CD8-positive, alpha-beta T cell (primary cell): ENCODE measurements at regions of chr3 and their contacts with region 1.

Region 1: DNA sequence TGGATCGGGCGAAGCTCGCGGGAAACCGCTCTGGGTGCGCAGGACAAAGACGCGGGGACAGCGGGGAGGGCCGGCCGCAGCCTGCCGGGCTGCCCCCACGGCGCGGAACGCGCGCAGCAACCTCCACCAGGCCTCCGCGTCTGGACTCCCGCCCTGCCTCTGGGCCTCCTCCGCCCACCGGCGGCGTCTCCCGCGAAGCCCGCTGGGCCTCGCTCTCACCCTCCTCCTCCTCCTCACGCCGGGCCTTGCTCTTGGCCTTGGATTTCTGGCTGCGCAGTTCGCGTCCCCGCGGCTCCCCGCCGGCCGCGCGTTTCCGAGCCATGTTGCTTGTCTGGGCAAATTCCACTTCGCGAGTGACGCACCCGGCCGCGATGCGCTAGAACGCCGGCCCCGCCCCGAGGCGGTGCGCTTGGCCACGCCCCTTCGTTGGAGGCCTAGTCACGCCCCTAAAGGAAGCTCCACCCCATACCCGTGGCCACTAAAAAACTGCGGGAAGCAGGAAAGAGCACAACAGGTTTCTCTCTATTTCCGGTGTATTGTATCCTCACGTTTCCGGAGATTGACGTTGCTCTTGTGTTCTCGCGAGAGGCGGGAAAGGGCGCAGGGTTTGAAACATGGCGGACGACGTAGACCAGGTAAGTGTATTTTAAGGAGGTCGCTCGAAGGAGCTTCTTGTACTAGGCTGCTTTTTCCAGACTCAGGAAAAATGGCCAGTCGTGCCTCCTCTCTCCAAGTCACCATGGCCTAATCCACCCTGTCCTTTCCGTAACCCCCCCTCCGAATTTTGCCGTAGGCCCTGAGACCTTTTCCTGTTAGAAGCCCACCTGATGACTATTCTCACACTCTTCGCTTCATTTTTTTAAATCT is at the starts of genes LSM3 and XPC:
- DNase-seq: peak; percentile 96 to 99 (median 98)
- ATAC-seq: peak; percentile 94
- H3K4me3 ChIP-seq: peak within 1 kb of the TSS; percentile 68
- H3K4me3 Mint-ChIP-seq: peak within 1 kb of the TSS; percentile 96
- H3K27ac ChIP-seq: peak within 1 kb of the TSS; percentile 91 to 99
- H3K27ac Mint-ChIP-seq: peak within 1 kb of the TSS; percentile 99
- H3K4me1 ChIP-seq: peaks cover 49% of the 10 kb centered on the region
- H3K4me1 Mint-ChIP-seq: peaks cover 78% of the 10 kb centered on the region
- H3K27me3 ChIP-seq: no peaks in the 10 kb centered on the region
- H3K27me3 Mint-ChIP-seq: no peaks in the 10 kb centered on the region
- CTCF ChIP-seq: no peak
- total RNA-seq, gene LSM3: 7.5 to 8.3 TPM
- total RNA-seq, gene XPC: 51.5 to 56.5 TPM

Region 2: GRCh38 chr3:12841149-12841970 is 1337.1 kb before region 1 on chr3 and contains the start of gene RPL32:
- CTCF ChIA-PET with region 1: no interaction called
- POLR2A ChIA-PET with region 1: no interaction called
- intact Hi-C with region 1: loop called in 1 of 2 experiments (anchors 5 kb)
- DNase-seq: peak; percentile 72 to 97 (median 84)
- ATAC-seq: peak; percentile 91
- H3K4me3 ChIP-seq: peak within 1 kb of the TSS; percentile 86 to 98
- H3K4me3 Mint-ChIP-seq: peak within 1 kb of the TSS; percentile 98
- H3K27ac ChIP-seq: peak within 1 kb of the TSS; percentile 93 to 95
- H3K27ac Mint-ChIP-seq: peak within 1 kb of the TSS; percentile 99
- H3K4me1 ChIP-seq: peaks cover 29% of the 10 kb centered on the region
- H3K4me1 Mint-ChIP-seq: peaks cover 48% of the 10 kb centered on the region
- H3K27me3 ChIP-seq: no peaks in the 10 kb centered on the region
- H3K27me3 Mint-ChIP-seq: no peaks in the 10 kb centered on the region
- CTCF ChIP-seq: peak; percentile 68
- total RNA-seq, gene RPL32: 4,188 to 4,224 TPM

Region 3: GRCh38 chr3:14124615-14125190 is 53.8 kb before region 1 on chr3 and contains the starts of genes CHCHD4 and TMEM43:
- CTCF ChIA-PET with region 1: interaction called, 8 read pairs
- POLR2A ChIA-PET with region 1: interaction called, 65 read pairs
- intact Hi-C with region 1: loop called (anchors 1 kb)
- DNase-seq: peak; percentile 95 to 100 (median 98)
- ATAC-seq: peak; percentile 87
- H3K4me3 ChIP-seq: peak within 1 kb of the TSS; percentile 95 to 100
- H3K4me3 Mint-ChIP-seq: peak within 1 kb of the TSS; percentile 96
- H3K27ac ChIP-seq: peak within 1 kb of the TSS; percentile 89 to 92
- H3K27ac Mint-ChIP-seq: peak within 1 kb of the TSS; percentile 93
- H3K4me1 ChIP-seq: peaks cover 30% of the 10 kb centered on the region
- H3K4me1 Mint-ChIP-seq: peaks cover 56% of the 10 kb centered on the region
- H3K27me3 ChIP-seq: no peaks in the 10 kb centered on the region
- H3K27me3 Mint-ChIP-seq: no peaks in the 10 kb centered on the region
- CTCF ChIP-seq: no peak
- total RNA-seq, gene CHCHD4: 0.71 to 1.7 TPM
- total RNA-seq, gene TMEM43: 20.1 to 24.3 TPM

Region 4: GRCh38 chr3:14402304-14402811 is 223.9 kb after region 1 on chr3 and contains the start of gene SLC6A6:
- CTCF ChIA-PET with region 1: no interaction called
- POLR2A ChIA-PET with region 1: interaction called, 16 read pairs
- intact Hi-C with region 1: loop called (anchors 1 to 2 kb)
- DNase-seq: peak; percentile 87 to 98 (median 95)
- ATAC-seq: peak; percentile 79
- H3K4me3 ChIP-seq: peak within 1 kb of the TSS; percentile 72 to 85
- H3K4me3 Mint-ChIP-seq: peak within 1 kb of the TSS; percentile 97
- H3K27ac ChIP-seq: peak within 1 kb of the TSS; percentile 70 to 91
- H3K27ac Mint-ChIP-seq: peak within 1 kb of the TSS; percentile 96
- H3K4me1 ChIP-seq: peaks cover 34% of the 10 kb centered on the region
- H3K4me1 Mint-ChIP-seq: peaks cover 46% of the 10 kb centered on the region
- H3K27me3 ChIP-seq: no peaks in the 10 kb centered on the region
- H3K27me3 Mint-ChIP-seq: no peaks in the 10 kb centered on the region
- CTCF ChIP-seq: peak; percentile 46
- total RNA-seq, gene SLC6A6: 25.8 to 30.9 TPM

Region 5: DNA sequence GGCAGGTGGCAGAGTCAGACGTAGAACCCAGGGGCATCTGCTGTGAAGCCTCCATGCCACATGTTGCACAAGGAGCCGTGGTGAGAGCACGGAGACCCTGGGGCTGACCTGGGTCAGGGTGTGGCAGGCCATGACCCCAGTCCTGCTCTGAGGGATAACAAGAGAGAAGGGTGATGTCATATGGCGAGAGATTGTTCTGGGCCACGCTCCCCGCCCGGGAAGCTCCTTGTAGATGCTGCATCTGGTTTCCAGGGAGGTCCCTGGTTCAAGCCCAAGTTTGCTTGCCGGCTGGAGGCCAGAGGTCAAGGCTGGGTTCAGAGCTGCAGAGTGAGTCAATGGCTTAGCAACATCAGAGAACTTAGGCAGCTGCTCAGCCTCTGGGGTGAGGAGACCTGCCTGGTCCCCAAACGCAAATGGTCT is 657.6 kb after region 1 on chr3:
- CTCF ChIA-PET with region 1: no interaction called
- POLR2A ChIA-PET with region 1: no interaction called
- intact Hi-C with region 1: no loop called
- DNase-seq: no peak
- ATAC-seq: no peak
- H3K4me3 ChIP-seq: no peak overlapping the region
- H3K4me3 Mint-ChIP-seq: no peak overlapping the region
- H3K27ac ChIP-seq: no peak overlapping the region
- H3K27ac Mint-ChIP-seq: no peak overlapping the region
- H3K4me1 ChIP-seq: no peaks in the 10 kb centered on the region
- H3K4me1 Mint-ChIP-seq: no peaks in the 10 kb centered on the region
- H3K27me3 ChIP-seq: no peaks in the 10 kb centered on the region
- H3K27me3 Mint-ChIP-seq: peaks cover 7% of the 10 kb centered on the region
- CTCF ChIP-seq: no peak

Region 6: GRCh38 chr3:14947886-14948555 is 769.5 kb after region 1 on chr3:
- CTCF ChIA-PET with region 1: no interaction called
- POLR2A ChIA-PET with region 1: interaction called, 3 read pairs
- intact Hi-C with region 1: loop called (anchors 1 to 2 kb)
- DNase-seq: peak; percentile 92 to 98 (median 95)
- ATAC-seq: peak; percentile 88
- H3K4me3 ChIP-seq: peak overlapping the region; percentile 98 to 99
- H3K4me3 Mint-ChIP-seq: peak overlapping the region; percentile 99
- H3K27ac ChIP-seq: peak overlapping the region; percentile 97 to 99
- H3K27ac Mint-ChIP-seq: peak overlapping the region; percentile 100
- H3K4me1 ChIP-seq: peaks cover 22% of the 10 kb centered on the region
- H3K4me1 Mint-ChIP-seq: peaks cover 70% of the 10 kb centered on the region
- H3K27me3 ChIP-seq: no peaks in the 10 kb centered on the region
- H3K27me3 Mint-ChIP-seq: no peaks in the 10 kb centered on the region
- CTCF ChIP-seq: no peak

Region 7: DNA sequence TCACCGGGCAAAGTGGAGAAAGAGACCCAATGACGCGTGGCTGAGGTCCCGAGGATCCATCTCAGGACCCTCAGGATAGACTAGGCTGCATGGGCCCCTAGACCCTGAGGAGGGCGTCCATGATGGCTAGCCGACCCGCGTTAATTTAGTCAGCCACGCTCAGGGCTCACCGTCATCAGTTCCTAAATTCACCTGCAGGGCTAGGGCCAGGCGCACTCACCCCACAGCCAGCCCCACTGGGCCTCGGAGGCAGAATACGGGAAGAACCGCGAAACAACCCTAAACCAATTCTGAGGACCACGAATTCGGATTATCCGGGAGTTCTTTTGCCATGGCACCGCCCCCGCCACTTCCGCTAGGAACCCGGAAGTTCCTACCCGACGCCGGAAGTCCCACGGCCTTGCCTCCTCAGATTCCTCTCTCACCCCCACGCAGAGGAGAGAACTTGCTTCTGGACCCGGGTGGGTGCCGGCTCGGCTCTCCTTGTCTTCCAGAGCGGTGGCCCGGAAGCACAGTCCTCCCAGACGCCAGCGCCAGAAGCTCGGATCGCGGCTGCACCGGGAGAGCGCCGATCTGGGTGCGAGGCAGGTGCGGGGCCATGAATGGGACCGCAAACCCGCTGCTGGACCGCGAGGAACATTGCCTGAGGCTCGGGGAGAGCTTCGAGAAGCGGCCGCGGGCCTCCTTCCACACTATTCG is 1248.9 kb after region 1 on chr3 and contains the starts of genes EAF1 and METTL6:
- CTCF ChIA-PET with region 1: no interaction called
- POLR2A ChIA-PET with region 1: no interaction called
- intact Hi-C with region 1: loop called in 1 of 2 experiments (anchors 10 kb)
- DNase-seq: peak; percentile 64 to 90 (median 86)
- ATAC-seq: peak; percentile 82
- H3K4me3 ChIP-seq: peak within 1 kb of the TSS; percentile 87 to 96
- H3K4me3 Mint-ChIP-seq: peak within 1 kb of the TSS; percentile 99
- H3K27ac ChIP-seq: peak within 1 kb of the TSS; percentile 81
- H3K27ac Mint-ChIP-seq: peak within 1 kb of the TSS; percentile 98
- H3K4me1 ChIP-seq: peaks cover 43% of the 10 kb centered on the region
- H3K4me1 Mint-ChIP-seq: peaks cover 66% of the 10 kb centered on the region
- H3K27me3 ChIP-seq: no peaks in the 10 kb centered on the region
- H3K27me3 Mint-ChIP-seq: no peaks in the 10 kb centered on the region
- CTCF ChIP-seq: peak; percentile 24
- total RNA-seq, gene EAF1: 33.7 to 36.0 TPM
- total RNA-seq, gene METTL6: 4.1 to 4.9 TPM